Psoas muscle (tissue), 8 donors: ENCODE measurements at regions of chr10 and their contacts with region 1.

Region 1: GRCh38 chr10:68105820-68106219 is 3.5 kb upstream of the MYPN start:
- DNase-seq: peak in 1 of 2 donors; percentile 60
- ATAC-seq: peak; percentile 63 to 75 (median 73)
- H3K4me3 ChIP-seq: peak overlapping the region; percentile 75
- H3K27ac ChIP-seq: peak overlapping the region; percentile 85
- H3K4me1 ChIP-seq: peaks cover 26% of the 10 kb centered on the region
- H3K27me3 ChIP-seq: no peaks in the 10 kb centered on the region
- CTCF ChIP-seq: no peak

Region 2: DNA sequence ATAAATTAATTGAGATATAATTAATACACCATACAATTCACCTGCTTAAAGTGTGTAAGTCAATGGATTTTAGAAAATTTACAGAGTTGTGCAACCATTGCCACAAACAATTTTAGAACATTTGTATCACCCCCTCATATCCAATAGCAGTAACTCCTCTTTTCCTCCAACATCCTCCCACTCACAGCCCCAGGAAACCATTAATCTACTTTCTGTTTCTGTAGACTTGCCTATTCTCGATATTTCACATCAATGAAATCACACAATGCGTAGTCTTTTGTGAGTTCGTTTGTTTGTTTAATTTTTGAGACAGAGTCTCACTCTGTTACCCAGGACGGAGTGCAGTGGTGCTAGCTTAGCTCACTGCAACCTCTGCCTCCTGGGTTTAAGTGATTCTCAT is 17.1 kb before region 1 on chr10:
- intact Hi-C with region 1: loop called in 1 of 2 experiments (anchors 2 kb)
- DNase-seq: no peak
- ATAC-seq: peak in 1 of 4 donors; percentile 20
- H3K4me3 ChIP-seq: peak overlapping the region; percentile 69
- H3K27ac ChIP-seq: peak overlapping the region; percentile 93
- H3K4me1 ChIP-seq: peaks cover 32% of the 10 kb centered on the region
- H3K27me3 ChIP-seq: no peaks in the 10 kb centered on the region
- CTCF ChIP-seq: no peak

Region 3: GRCh38 chr10:68144709-68145108 is 38.9 kb after region 1 on chr10:
- intact Hi-C with region 1: loop called in 1 of 2 experiments (anchors 5 kb)
- DNase-seq: no peak
- ATAC-seq: no peak
- H3K4me3 ChIP-seq: no peak overlapping the region
- H3K27ac ChIP-seq: peak overlapping the region; percentile 85
- H3K4me1 ChIP-seq: peaks cover 52% of the 10 kb centered on the region
- H3K27me3 ChIP-seq: no peaks in the 10 kb centered on the region
- CTCF ChIP-seq: no peak